Natural killer cell (primary cell): ENCODE measurements at regions of chr17 and their contacts with region 1.

Region 1: GRCh38 chr17:35022536-35023063 is 40.9 kb downstream of the RFFL start:
- DNase-seq: peak; percentile 74 to 85
- ATAC-seq: peak; percentile 97 to 99 (median 99)
- H3K4me3 ChIP-seq: no peak overlapping the region
- H3K4me3 Mint-ChIP-seq: peak overlapping the region; percentile 75
- H3K27ac ChIP-seq: peak overlapping the region; percentile 90
- H3K27ac Mint-ChIP-seq: peak overlapping the region; percentile 99
- H3K4me1 ChIP-seq: peaks cover 25% of the 10 kb centered on the region
- H3K4me1 Mint-ChIP-seq: peaks cover 31 to 38% of the 10 kb centered on the region in 2 donors
- H3K27me3 ChIP-seq: no peaks in the 10 kb centered on the region
- H3K27me3 Mint-ChIP-seq: no peaks in the 10 kb centered on the region
- CTCF ChIP-seq: no peak

Region 2: GRCh38 chr17:35063514-35064223 is 41.1 kb after region 1 on chr17 and contains the start of gene RFFL:
- intact Hi-C with region 1: loop called (anchors 1 kb)
- DNase-seq: peak; percentile 78 to 96
- ATAC-seq: peak; percentile 92 to 98 (median 95)
- H3K4me3 ChIP-seq: peak within 1 kb of the TSS; percentile 23
- H3K4me3 Mint-ChIP-seq: peak within 1 kb of the TSS; percentile 59
- H3K27ac ChIP-seq: peak within 1 kb of the TSS; percentile 82
- H3K27ac Mint-ChIP-seq: peak within 1 kb of the TSS; percentile 98 to 99
- H3K4me1 ChIP-seq: peaks cover 16% of the 10 kb centered on the region
- H3K4me1 Mint-ChIP-seq: peaks cover 49 to 58% of the 10 kb centered on the region in 2 donors
- H3K27me3 ChIP-seq: no peaks in the 10 kb centered on the region
- H3K27me3 Mint-ChIP-seq: no peaks in the 10 kb centered on the region
- CTCF ChIP-seq: no peak
- total RNA-seq, gene RFFL: 50.0 to 86.6 (median 75.9) TPM

Region 3: DNA sequence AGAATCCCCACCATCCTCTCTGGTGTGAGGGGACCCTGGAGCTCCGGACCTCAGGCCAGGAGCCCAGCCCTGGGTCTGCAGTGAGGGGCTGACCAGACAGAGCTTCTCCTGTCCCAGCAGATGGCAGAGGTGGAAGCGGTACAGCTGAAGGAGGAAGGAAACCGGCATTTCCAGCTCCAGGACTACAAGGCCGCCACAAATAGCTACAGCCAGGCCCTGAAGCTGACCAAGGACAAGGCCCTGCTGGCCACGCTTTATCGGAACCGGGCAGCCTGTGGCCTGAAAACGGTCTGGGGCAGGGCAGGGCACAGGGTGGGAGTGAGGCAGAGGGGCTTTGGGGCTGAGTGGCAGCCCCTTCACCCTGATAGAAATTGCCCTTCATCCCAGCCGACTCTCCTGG is 125.5 kb after region 1 on chr17:
- intact Hi-C with region 1: no loop called
- DNase-seq: no peak
- ATAC-seq: no peak
- H3K4me3 ChIP-seq: no peak overlapping the region
- H3K4me3 Mint-ChIP-seq: no peak overlapping the region
- H3K27ac ChIP-seq: no peak overlapping the region
- H3K27ac Mint-ChIP-seq: no peak overlapping the region
- H3K4me1 ChIP-seq: no peaks in the 10 kb centered on the region
- H3K4me1 Mint-ChIP-seq: no peaks in the 10 kb centered on the region
- H3K27me3 ChIP-seq: no peaks in the 10 kb centered on the region
- H3K27me3 Mint-ChIP-seq: no peaks in the 10 kb centered on the region
- CTCF ChIP-seq: no peak

Region 4: DNA sequence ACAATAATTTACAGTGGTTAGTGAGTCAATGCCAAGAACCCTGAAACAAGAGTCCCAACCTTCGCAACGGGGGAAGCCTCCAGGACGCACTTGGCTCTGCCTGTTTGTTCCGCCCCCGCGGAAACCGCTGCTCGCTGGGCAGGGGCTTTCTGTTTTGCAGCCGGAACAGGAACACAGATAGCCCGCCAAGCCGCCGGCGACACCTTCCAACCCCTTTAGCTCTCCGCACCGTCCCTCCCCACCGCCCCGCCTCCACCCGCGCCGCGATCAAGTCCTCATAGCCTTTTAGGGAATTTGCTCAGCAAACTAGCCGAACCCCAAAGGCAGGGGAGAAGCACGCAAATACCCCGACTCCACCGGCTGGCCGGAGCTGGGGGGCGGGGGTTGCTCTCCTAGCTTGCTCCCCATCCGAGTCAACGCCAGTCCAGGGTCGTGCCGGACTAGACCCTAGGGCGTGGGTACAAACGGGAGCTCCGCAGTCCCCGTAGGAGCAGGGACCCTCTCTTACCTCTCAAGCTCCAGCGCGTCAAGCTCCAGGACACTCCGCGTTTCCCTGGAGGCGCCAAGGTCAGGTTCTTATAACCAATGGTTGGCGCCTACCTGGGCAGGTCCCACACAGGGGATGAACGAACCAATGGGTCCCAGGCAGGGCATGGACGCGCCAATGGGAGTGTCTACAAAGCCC is 425.8 kb after region 1 on chr17 and contains the start of gene SLFN13:
- intact Hi-C with region 1: no loop called
- DNase-seq: peak; percentile 80 to 91
- ATAC-seq: peak; percentile 79 to 91 (median 86)
- H3K4me3 ChIP-seq: peak within 1 kb of the TSS; percentile 91
- H3K4me3 Mint-ChIP-seq: peak within 1 kb of the TSS; percentile 98
- H3K27ac ChIP-seq: peak within 1 kb of the TSS; percentile 97
- H3K27ac Mint-ChIP-seq: peak within 1 kb of the TSS; percentile 96 to 98
- H3K4me1 ChIP-seq: peaks cover 28% of the 10 kb centered on the region
- H3K4me1 Mint-ChIP-seq: peaks cover 44 to 46% of the 10 kb centered on the region in 2 donors
- H3K27me3 ChIP-seq: no peaks in the 10 kb centered on the region
- H3K27me3 Mint-ChIP-seq: no peaks in the 10 kb centered on the region
- CTCF ChIP-seq: no peak
- total RNA-seq, gene SLFN13: 85.9 to 182 (median 129) TPM